ENCODE measurements at regions of chr12 and their contacts with region 1.

Region 1: GRCh38 chr12:8890313-8891085 is 23.8 kb upstream of the PHC1 start:
- DNase-seq: peak; percentile 52 to 68 (median 62)
- H3K4me3 ChIP-seq: peak overlapping the region; percentile 44 to 49
- H3K4me3 Mint-ChIP-seq: peak overlapping the region; percentile 88 to 96 (median 94)
- H3K27ac ChIP-seq: peak overlapping the region; percentile 29
- H3K27ac Mint-ChIP-seq: peak overlapping the region in 6 of 7 donors; percentile 81 to 93 (median 84)
- H3K4me1 ChIP-seq: no peaks in the 10 kb centered on the region
- H3K4me1 Mint-ChIP-seq: peaks cover 0 to 6% (median 5%) of the 10 kb centered on the region in 4 donors
- H3K27me3 ChIP-seq: no peaks in the 10 kb centered on the region
- H3K27me3 Mint-ChIP-seq: no peaks in the 10 kb centered on the region

Region 2: DNA sequence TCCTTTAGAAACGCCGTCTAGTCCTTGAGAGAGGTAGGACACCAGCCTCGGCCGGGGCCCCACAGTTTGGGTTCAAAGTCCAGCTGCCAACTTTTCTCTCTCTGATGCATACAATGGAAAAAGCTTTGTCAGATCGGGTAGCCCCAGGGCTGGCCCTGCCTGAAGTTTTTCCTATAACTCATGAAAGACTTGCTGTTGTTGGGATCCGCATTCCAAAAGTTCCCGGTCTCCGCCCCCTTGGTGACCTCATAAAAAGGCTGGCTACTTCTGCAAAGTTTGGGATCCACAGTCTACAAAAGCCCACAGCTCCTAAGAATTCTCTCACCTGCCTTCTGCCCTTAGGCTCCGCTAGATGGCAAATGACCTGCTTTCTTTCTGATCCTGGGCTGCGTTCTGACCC is 470.0 kb before region 1 on chr12:
- CTCF ChIA-PET with region 1: no interaction called
- POLR2A ChIA-PET with region 1: no interaction called
- intact Hi-C with region 1: no loop called
- DNase-seq: no peak
- H3K4me3 ChIP-seq: no peak overlapping the region
- H3K4me3 Mint-ChIP-seq: no peak overlapping the region
- H3K27ac ChIP-seq: no peak overlapping the region
- H3K27ac Mint-ChIP-seq: no peak overlapping the region
- H3K4me1 ChIP-seq: no peaks in the 10 kb centered on the region
- H3K4me1 Mint-ChIP-seq: no peaks in the 10 kb centered on the region
- H3K27me3 ChIP-seq: no peaks in the 10 kb centered on the region
- H3K27me3 Mint-ChIP-seq: no peaks in the 10 kb centered on the region

Region 3: DNA sequence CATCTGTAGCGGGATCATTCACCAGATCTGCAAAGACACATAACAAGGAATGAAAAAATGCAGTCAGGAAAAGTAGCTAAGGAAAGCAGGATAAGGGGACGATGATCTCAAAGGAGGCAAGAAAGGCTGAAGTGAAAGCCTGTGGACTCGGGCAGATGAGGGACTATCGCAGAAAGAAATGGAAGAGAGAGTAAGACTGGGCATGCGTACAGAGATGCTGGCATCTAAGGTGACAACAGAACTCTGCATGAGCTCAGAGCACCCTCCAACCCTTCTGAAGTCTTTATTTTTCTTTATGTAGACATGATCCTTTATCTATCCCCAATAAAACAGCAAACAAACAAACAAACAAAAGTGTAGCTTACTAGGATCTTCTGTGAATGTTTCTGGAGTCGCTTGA is 235.1 kb before region 1 on chr12:
- CTCF ChIA-PET with region 1: interaction called, 41 read pairs
- POLR2A ChIA-PET with region 1: interaction called, 6 read pairs
- intact Hi-C with region 1: loop called (anchors 1 kb)
- DNase-seq: no peak
- H3K4me3 ChIP-seq: no peak overlapping the region
- H3K4me3 Mint-ChIP-seq: no peak overlapping the region
- H3K27ac ChIP-seq: no peak overlapping the region
- H3K27ac Mint-ChIP-seq: no peak overlapping the region
- H3K4me1 ChIP-seq: no peaks in the 10 kb centered on the region
- H3K4me1 Mint-ChIP-seq: peaks cover 0 to 1% (median 0%) of the 10 kb centered on the region in 4 donors
- H3K27me3 ChIP-seq: no peaks in the 10 kb centered on the region
- H3K27me3 Mint-ChIP-seq: peaks cover 0 to 3% of the 10 kb centered on the region in 2 donors

Region 4: GRCh38 chr12:8681041-8681902 is 209.2 kb before region 1 on chr12:
- CTCF ChIA-PET with region 1: interaction called, 72 read pairs
- POLR2A ChIA-PET with region 1: no interaction called
- intact Hi-C with region 1: loop called (anchors 1 kb)
- DNase-seq: no peak
- H3K4me3 ChIP-seq: no peak overlapping the region
- H3K4me3 Mint-ChIP-seq: no peak overlapping the region
- H3K27ac ChIP-seq: no peak overlapping the region
- H3K27ac Mint-ChIP-seq: peak overlapping the region in 1 of 7 donors; percentile 30
- H3K4me1 ChIP-seq: no peaks in the 10 kb centered on the region
- H3K4me1 Mint-ChIP-seq: peaks cover 0 to 9% (median 5%) of the 10 kb centered on the region in 4 donors
- H3K27me3 ChIP-seq: no peaks in the 10 kb centered on the region
- H3K27me3 Mint-ChIP-seq: peaks cover 5 to 10% of the 10 kb centered on the region in 2 donors

Region 5: GRCh38 chr12:8712572-8712971 is 177.9 kb before region 1 on chr12:
- CTCF ChIA-PET with region 1: no interaction called
- POLR2A ChIA-PET with region 1: no interaction called
- intact Hi-C with region 1: no loop called
- DNase-seq: no peak
- H3K4me3 ChIP-seq: no peak overlapping the region
- H3K4me3 Mint-ChIP-seq: no peak overlapping the region
- H3K27ac ChIP-seq: no peak overlapping the region
- H3K27ac Mint-ChIP-seq: no peak overlapping the region
- H3K4me1 ChIP-seq: no peaks in the 10 kb centered on the region
- H3K4me1 Mint-ChIP-seq: peaks cover 0 to 6% (median 2%) of the 10 kb centered on the region in 4 donors
- H3K27me3 ChIP-seq: no peaks in the 10 kb centered on the region
- H3K27me3 Mint-ChIP-seq: no peaks in the 10 kb centered on the region

Region 6: GRCh38 chr12:8870586-8870985 is 19.9 kb before region 1 on chr12:
- CTCF ChIA-PET with region 1: interaction called, 14 read pairs
- POLR2A ChIA-PET with region 1: no interaction called
- intact Hi-C with region 1: no loop called
- DNase-seq: no peak
- H3K4me3 ChIP-seq: no peak overlapping the region
- H3K4me3 Mint-ChIP-seq: no peak overlapping the region
- H3K27ac ChIP-seq: no peak overlapping the region
- H3K27ac Mint-ChIP-seq: no peak overlapping the region
- H3K4me1 ChIP-seq: no peaks in the 10 kb centered on the region
- H3K4me1 Mint-ChIP-seq: no peaks in the 10 kb centered on the region
- H3K27me3 ChIP-seq: no peaks in the 10 kb centered on the region
- H3K27me3 Mint-ChIP-seq: no peaks in the 10 kb centered on the region

Region 7: GRCh38 chr12:8905546-8905945 is 15.0 kb after region 1 on chr12:
- CTCF ChIA-PET with region 1: interaction called, 14 read pairs
- POLR2A ChIA-PET with region 1: no interaction called
- intact Hi-C with region 1: no loop called
- DNase-seq: no peak
- H3K4me3 ChIP-seq: no peak overlapping the region
- H3K4me3 Mint-ChIP-seq: no peak overlapping the region
- H3K27ac ChIP-seq: no peak overlapping the region
- H3K27ac Mint-ChIP-seq: no peak overlapping the region
- H3K4me1 ChIP-seq: no peaks in the 10 kb centered on the region
- H3K4me1 Mint-ChIP-seq: peaks cover 0 to 3% (median 0%) of the 10 kb centered on the region in 4 donors
- H3K27me3 ChIP-seq: no peaks in the 10 kb centered on the region
- H3K27me3 Mint-ChIP-seq: peaks cover 0 to 6% of the 10 kb centered on the region in 2 donors

Region 8: DNA sequence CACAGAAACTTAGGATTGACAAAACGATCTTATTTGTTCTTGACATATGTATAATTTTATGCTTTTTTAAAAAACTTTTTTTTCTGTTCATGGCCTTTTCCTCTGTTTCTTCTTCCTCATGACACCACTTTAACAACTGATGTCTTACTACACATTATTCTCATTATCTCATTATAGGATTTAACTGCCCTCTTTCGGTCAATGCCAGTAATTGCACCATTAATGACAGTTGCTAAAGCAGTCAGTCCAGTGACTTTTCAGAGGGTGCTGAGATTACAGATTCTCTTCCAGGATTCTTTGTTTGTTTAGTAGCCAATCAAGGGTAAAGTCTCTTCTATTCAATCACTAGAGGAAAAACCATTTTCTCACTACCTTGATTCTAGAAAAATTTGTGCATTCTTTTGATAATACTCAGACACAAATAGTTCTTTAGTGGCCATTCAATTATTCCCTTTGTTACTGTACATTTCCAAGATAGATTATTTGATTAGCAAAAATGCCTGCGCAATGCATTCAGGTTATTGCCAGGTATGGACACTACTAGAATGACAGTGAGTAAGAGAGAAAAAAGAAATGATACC is 149.0 kb after region 1 on chr12:
- CTCF ChIA-PET with region 1: interaction called, 15 read pairs
- POLR2A ChIA-PET with region 1: no interaction called
- intact Hi-C with region 1: loop called (anchors 2 kb)
- DNase-seq: peak in 4 of 5 donors; percentile 67 to 75 (median 70)
- H3K4me3 ChIP-seq: no peak overlapping the region
- H3K4me3 Mint-ChIP-seq: peak overlapping the region in 6 of 8 donors; percentile 5 to 57 (median 50)
- H3K27ac ChIP-seq: peak overlapping the region; percentile 2
- H3K27ac Mint-ChIP-seq: peak overlapping the region; percentile 38 to 82 (median 66)
- H3K4me1 ChIP-seq: peaks cover 68% of the 10 kb centered on the region
- H3K4me1 Mint-ChIP-seq: peaks cover 45 to 84% (median 64%) of the 10 kb centered on the region in 4 donors
- H3K27me3 ChIP-seq: no peaks in the 10 kb centered on the region
- H3K27me3 Mint-ChIP-seq: no peaks in the 10 kb centered on the region